Activated CD4-positive, alpha-beta memory T cell treated with anti-CD3 and anti-CD28 coated beads for 36 hours (primary cell): ENCODE measurements at regions of chr7 and their contacts with region 1.

Region 1: GRCh38 chr7:91940572-91941341 is at the start of gene AKAP9:
- DNase-seq: peak; percentile 93
- H3K4me3 Mint-ChIP-seq: peak within 1 kb of the TSS; percentile 92
- H3K27ac Mint-ChIP-seq: peak within 1 kb of the TSS; percentile 86
- H3K4me1 Mint-ChIP-seq: peaks cover 35% of the 10 kb centered on the region
- H3K27me3 Mint-ChIP-seq: peaks cover 1% of the 10 kb centered on the region
- total RNA-seq, gene AKAP9: 23.5 to 25.3 TPM

Region 2: DNA sequence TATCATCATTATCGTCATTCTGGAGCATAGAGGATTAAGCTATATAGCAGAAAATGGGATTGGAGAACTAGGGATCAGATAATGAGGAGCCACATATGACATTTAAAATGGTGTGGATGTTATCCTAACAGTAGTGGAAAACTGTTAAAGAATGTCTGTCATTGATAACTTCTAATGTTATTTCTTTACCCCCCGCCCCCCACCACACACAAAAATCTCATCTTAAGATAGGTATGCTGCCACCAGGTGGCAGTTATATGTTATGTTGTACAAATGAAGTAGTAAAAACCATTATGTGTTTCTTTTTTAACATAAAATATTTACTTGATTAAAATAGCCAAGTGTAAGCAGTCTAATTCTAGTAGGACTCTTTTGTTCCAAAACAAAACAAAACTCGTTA is 12.9 kb after region 1 on chr7:
- CTCF ChIA-PET with region 1: interaction called, 12 read pairs
- POLR2A ChIA-PET with region 1: no interaction called
- intact Hi-C with region 1: no loop called
- DNase-seq: no peak
- H3K4me3 Mint-ChIP-seq: no peak overlapping the region
- H3K27ac Mint-ChIP-seq: no peak overlapping the region
- H3K4me1 Mint-ChIP-seq: peaks cover 23% of the 10 kb centered on the region
- H3K27me3 Mint-ChIP-seq: no peaks in the 10 kb centered on the region

Region 3: GRCh38 chr7:92245487-92246362 is 305.0 kb after region 1 on chr7 and contains the starts of genes ANKIB1 and KRIT1:
- CTCF ChIA-PET with region 1: no interaction called
- POLR2A ChIA-PET with region 1: interaction called, 5 read pairs
- intact Hi-C with region 1: loop called (anchors 2 kb)
- DNase-seq: peak; percentile 92
- H3K4me3 Mint-ChIP-seq: peak within 1 kb of the TSS; percentile 99
- H3K27ac Mint-ChIP-seq: peak within 1 kb of the TSS; percentile 100
- H3K4me1 Mint-ChIP-seq: peaks cover 29% of the 10 kb centered on the region
- H3K27me3 Mint-ChIP-seq: no peaks in the 10 kb centered on the region
- total RNA-seq, gene ANKIB1: 34.8 to 39.9 TPM
- total RNA-seq, gene KRIT1: 29.2 to 29.3 TPM